ENCODE measurements at regions of chr3 and their contacts with region 1.

Region 1: DNA sequence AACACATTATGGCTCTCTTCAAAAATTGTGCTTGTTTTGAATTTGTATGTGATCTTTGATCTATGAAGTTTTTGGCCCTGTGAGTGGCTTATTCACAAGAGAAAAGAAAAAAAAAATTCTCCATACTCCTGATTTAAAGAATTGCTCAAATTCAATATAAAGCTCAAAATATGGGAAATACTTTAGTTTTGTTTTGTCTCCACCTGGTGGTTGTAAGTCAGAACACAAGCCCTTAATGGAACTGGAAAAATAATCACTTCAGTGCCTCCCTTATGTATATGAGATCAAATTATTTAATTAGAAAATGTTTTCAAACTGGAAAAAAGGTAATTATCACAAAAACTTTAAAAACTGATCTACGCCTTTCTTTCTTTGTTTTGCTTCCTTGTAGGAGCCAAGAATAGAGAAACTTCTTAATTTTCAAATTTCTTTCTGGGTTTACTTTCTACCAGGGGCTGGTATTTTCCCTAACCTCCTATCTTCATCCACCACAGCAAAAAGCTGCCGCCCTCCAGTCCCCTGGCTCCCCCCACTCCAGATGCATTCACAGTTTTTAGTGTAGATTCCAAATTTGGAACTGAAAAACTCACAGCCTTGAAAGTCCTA is 50.6 kb downstream of the SERP1 start:
- DNase-seq: peak in 2 of 5 donors; percentile 73 to 78
- H3K4me3 ChIP-seq: no peak overlapping the region
- H3K27ac ChIP-seq: no peak overlapping the region
- H3K4me1 ChIP-seq: no peaks in the 10 kb centered on the region
- H3K27me3 ChIP-seq: no peaks in the 10 kb centered on the region
- CTCF ChIP-seq: peak; percentile 68

Region 2: DNA sequence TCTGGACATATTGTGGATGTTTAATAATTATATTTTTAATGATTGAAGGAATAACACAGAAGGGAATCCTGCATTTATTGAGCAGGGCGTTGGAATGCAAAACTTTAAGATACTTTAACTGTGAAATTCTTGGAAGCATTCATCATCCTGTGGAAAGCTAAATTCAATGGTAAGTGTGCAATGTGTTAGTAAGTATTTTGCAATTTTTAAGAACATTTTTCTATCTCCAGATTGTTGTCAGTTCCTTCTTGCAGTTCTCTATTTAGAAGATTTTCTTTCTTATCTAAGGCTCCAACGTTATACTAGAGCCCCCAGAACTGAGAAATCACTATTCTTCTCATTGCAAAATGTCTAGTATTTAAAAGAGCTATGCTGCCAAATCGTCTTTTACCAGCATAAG is 219.7 kb before region 1 on chr3:
- intact Hi-C with region 1: no loop called
- DNase-seq: no peak
- H3K4me3 ChIP-seq: no peak overlapping the region
- H3K27ac ChIP-seq: no peak overlapping the region
- H3K4me1 ChIP-seq: peaks cover 0 to 4% (median 4%) of the 10 kb centered on the region in 3 donors
- H3K27me3 ChIP-seq: no peaks in the 10 kb centered on the region
- CTCF ChIP-seq: no peak

Region 3: GRCh38 chr3:150409512-150410310 is 86.0 kb before region 1 on chr3:
- intact Hi-C with region 1: loop called (anchors 10 kb)
- DNase-seq: peak; percentile 83 to 92 (median 89)
- H3K4me3 ChIP-seq: peak overlapping the region; percentile 84 to 94 (median 87)
- H3K27ac ChIP-seq: peak overlapping the region; percentile 99 to 100
- H3K4me1 ChIP-seq: peaks cover 0 to 5% (median 5%) of the 10 kb centered on the region in 3 donors
- H3K27me3 ChIP-seq: no peaks in the 10 kb centered on the region
- CTCF ChIP-seq: peak; percentile 47

Region 4: GRCh38 chr3:150681057-150681456 is 185.4 kb after region 1 on chr3:
- intact Hi-C with region 1: no loop called
- DNase-seq: no peak
- H3K4me3 ChIP-seq: no peak overlapping the region
- H3K27ac ChIP-seq: no peak overlapping the region
- H3K4me1 ChIP-seq: no peaks in the 10 kb centered on the region
- H3K27me3 ChIP-seq: no peaks in the 10 kb centered on the region
- CTCF ChIP-seq: no peak

Measured in kidney (tissue), 22 donors.